ENCODE measurements at regions of chr7 and their contacts with region 1.

Region 1: DNA sequence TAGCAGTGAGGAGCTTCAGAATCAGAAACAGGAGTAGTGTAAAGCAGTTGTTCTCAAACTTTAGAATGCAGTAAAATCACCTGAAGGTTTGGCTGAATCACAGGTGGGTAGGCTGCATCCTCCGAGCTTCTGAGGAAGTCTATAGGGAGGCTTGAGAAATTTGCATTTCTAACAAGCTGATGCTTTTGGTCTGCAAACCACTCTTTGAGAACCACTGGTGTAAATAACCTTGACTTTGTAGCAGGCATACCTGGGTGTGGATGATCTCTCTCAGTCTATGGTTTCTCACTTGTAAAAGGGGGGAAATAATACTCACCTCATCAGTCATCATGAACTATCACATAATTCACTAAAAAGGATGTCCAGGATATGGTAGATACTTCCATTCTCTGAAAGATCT is 118.1 kb downstream of the SRI start:
- DNase-seq: no peak
- ATAC-seq: no peak
- H3K4me3 ChIP-seq: no peak overlapping the region
- H3K27ac ChIP-seq: no peak overlapping the region
- H3K4me1 ChIP-seq: peaks cover 16% of the 10 kb centered on the region
- H3K27me3 ChIP-seq: no peaks in the 10 kb centered on the region
- CTCF ChIP-seq: no peak
- EP300 ChIP-seq: no peak
- POLR2A ChIP-seq: no peak
- RAD21 ChIP-seq: no peak

Region 2: DNA sequence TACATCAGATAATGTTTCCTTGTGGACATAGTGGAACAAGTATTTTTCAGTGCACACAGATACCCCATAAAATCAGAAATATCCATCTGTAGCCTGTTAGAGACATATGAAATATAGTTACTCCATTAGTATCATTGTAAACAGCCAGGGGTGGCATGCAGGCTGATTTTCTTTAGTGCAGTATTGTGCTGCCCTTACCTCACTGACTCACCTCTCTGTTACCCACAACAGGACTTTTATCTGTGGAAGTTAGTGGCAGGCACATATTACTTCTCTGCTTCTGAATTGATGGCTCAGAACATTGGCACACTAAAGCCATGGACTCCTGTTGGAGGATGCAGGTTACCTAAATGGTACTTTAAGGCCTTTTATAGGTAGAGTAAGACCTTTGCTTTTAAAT is 295.6 kb before region 1 on chr7:
- CTCF ChIA-PET with region 1: no interaction called
- POLR2A ChIA-PET with region 1: no interaction called
- in situ Hi-C with region 1: loop called (anchors 10 kb)
- intact Hi-C with region 1: no loop called
- DNase-seq: no peak
- ATAC-seq: no peak
- H3K4me3 ChIP-seq: no peak overlapping the region
- H3K27ac ChIP-seq: no peak overlapping the region
- H3K4me1 ChIP-seq: no peaks in the 10 kb centered on the region
- H3K27me3 ChIP-seq: no peaks in the 10 kb centered on the region
- CTCF ChIP-seq: no peak
- EP300 ChIP-seq: no peak
- POLR2A ChIP-seq: no peak
- RAD21 ChIP-seq: no peak